ENCODE measurements at regions of chr12 and their contacts with region 1.

Region 1: GRCh38 chr12:126907900-126908764 is 1358.8 kb upstream of the TMEM132C start:
- DNase-seq: no peak

Region 2: GRCh38 chr12:126811391-126811790 is 96.7 kb before region 1 on chr12:
- in situ Hi-C with region 1: no loop called
- DNase-seq: peak; percentile 9

Region 3: DNA sequence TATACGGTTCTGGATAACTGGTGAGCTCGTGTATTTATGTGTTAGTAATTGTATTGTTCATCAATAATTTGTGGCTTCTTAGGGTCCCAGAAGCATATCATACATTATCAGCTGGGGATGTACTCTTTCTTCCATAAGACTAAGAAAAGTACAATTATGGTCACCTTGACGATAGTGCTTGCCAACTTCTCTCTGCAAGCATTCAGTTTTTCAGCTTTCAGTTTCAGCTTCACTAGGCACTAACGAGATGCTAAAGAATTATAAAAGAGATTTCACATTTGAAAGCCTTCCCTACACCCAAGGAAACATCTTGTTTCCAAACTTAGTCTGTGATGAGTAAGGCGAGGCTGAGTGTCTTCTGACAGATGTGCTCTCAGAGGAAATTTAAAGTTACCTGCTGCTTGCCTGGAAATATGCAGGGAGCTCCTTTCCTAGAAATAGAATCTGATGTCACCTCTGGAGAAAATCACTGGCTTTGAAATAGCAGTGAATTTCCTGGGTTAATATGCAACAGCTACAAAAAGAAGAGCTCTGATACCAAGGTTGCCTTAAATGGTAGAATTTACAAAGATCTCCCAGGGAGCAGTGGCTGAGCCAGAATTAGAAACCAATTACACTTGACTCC is 61.0 kb before region 1 on chr12:
- in situ Hi-C with region 1: no loop called
- DNase-seq: no peak

Region 4: DNA sequence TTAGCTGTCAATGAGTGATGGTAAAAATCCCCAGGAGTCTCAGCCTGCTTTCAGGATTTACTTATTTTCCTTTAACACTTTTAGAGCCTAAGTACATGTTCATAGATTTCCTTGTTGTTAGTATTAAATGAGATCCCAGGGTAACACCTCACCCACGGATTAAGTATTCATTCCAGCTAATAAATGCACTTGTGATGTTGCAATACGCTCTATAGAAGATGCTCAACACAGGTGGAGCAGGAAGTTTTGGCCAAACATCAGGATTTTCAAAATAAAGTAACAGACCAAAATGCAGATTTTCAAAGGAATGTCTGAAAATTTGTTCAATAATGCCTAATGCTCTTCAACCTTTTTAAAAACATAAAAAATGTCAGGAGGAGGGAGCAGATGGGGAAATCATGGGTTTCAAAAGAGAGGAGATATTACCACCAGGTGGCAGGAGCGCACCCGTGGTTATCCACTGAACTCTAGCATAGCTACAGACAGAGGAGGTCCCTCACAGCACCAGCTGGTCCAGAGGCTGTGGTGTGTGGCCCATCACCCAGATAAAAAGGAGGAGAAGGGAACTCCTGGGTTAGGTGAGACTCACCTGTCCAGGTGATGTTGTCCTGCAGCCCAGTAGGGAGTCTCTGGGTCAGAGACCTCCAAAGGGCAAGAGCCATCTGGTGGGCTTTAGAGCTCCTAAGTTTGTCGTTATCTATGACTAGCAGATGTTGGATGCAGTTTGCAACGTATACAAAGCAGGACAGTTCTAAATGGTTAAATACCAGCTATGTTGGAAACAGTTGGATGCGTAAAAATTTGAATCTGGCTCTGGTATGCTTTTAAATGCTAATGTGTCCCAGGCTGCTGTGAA is 200.5 kb after region 1 on chr12:
- in situ Hi-C with region 1: loop called (anchors 25 kb)
- DNase-seq: peak; percentile 63